RWPE1 (cell line): ENCODE measurements at regions of chr3 and their contacts with region 1.

Region 1: GRCh38 chr3:129992781-129993180 is 18.3 kb downstream of the TRH start:
- DNase-seq: peak; percentile 20
- H3K27ac ChIP-seq: no peak overlapping the region
- CTCF ChIP-seq: no peak

Region 2: DNA sequence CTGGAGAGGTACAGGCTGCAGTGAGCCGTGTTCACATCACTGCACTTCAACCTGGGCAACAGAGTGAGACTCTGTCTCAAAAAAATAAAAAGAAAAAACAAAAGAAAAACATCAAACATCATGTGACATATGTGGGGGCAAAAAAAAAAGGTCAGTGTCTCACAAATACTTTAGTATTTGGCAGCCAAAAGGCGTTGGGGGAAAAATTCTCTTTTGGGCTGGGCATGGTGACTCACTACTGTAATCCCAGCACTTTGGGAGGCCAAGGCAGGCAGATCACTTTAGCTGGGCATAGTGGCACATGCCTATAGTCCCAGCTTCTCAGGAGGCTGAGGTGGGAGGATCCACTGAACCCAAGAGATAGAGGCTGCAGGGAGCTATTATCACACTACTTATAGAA is 146.8 kb before region 1 on chr3:
- CTCF ChIA-PET with region 1: no interaction called
- POLR2A ChIA-PET with region 1: no interaction called
- DNase-seq: no peak
- H3K27ac ChIP-seq: peak overlapping the region; percentile 41
- CTCF ChIP-seq: no peak

Region 3: GRCh38 chr3:129892857-129893580 is 99.8 kb before region 1 on chr3:
- CTCF ChIA-PET with region 1: interaction called, 15 read pairs
- POLR2A ChIA-PET with region 1: no interaction called
- DNase-seq: peak; percentile 22
- H3K27ac ChIP-seq: peak overlapping the region; percentile 91
- CTCF ChIP-seq: no peak

Region 4: DNA sequence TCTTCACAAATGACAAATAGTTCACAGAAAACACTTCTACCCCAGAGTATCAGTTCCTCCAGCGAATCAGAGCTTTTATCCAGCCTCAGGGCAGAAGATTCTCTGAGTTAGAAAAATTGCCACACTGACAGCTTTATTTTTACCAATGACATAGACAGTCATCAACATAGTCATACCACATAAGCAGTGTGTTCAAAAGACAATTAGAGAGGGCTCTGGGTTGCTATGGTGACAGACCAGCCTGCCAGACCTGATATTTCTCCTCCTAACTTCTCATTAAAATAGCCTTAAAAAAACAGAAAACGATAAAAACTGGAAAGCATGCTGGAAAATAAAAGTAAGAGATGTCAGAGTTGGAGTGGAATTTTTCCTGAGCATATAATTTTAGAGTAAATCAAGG is 306.8 kb after region 1 on chr3:
- CTCF ChIA-PET with region 1: no interaction called
- POLR2A ChIA-PET with region 1: no interaction called
- DNase-seq: no peak
- H3K27ac ChIP-seq: no peak overlapping the region
- CTCF ChIP-seq: no peak